GM10248 (cell line): ENCODE measurements at regions of chr19 and their contacts with region 1.

Region 1: DNA sequence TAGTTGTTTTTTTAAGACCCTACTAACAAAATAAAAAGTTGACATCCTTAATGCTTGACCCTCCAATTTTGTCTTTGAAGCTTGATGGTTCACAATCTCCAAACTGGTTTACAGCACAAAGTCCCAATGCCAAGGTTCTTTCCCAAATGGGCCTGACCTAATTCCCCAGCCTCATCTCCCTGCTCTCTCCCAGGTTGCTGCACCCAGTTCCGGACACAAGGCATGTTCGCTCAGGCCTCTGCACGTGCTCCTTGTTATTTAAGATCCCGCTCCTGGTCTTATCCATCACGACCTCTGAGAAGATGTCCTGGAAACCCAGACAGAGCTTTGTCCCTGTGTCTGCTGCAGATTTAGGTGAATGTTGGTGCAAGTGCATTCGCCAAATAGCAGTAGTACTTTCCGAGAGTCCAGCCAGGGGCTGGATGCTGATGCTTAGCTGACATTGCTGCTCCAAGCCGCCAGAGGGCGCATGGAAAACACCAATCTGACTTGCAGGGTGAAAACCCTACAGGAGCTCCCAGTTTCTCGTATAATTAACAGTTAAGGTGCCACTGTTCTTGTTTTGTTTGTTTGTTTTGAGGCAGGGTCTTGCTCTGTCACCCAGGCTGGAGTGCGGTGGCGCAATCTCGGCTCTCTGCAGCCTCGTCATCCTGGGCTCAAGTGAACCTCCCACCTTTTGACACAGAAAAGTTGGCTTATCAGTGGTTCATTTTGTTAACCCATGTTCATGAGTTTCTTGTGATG is 18.5 kb downstream of the LYPD3 start:
- DNase-seq: peak; percentile 81
- CTCF ChIP-seq: peak; percentile 90

Region 2: DNA sequence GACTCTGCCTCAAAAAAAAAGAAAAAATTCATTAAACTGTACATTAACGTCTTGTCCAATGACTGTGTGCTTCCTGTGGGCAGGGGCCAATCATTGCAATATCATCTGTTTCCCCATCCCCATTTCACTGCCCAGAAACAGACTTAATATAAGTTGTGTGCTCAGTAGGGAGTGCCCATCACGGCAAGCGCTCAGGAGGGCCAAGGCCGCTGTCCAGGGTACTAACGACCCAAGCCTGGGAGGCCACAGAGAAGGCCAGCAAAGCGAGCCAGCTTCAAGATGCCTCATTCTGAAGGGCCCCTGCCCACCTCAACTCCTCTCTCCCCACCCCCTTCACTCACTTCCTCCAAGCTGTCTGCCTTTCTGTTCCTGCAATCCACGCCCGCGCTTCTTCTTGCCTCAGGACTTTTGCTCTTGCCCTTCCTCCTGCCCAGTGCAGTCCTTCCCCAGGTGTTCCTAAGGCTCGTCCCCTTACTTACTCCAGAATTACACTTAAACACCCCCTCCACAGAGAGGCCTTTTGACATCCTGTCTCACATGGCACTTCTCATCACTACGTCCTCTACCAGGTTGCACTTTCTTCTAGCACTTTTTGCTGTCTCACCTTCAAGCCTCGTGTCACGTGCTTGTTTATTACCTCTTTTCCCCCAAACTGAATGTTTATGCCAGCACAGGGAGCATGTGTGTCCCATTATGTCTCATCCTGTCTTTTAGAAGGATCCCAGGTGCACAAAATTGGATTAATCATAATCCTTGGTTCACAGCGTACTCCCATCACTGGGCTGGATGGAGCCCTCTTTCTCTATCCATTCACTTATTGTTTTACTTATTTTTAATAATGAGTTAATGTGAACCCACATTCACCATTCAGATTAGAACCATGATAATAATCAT is 1303.3 kb before region 1 on chr19:
- CTCF ChIA-PET with region 1: no interaction called
- POLR2A ChIA-PET with region 1: no interaction called
- DNase-seq: no peak
- CTCF ChIP-seq: no peak

Region 3: DNA sequence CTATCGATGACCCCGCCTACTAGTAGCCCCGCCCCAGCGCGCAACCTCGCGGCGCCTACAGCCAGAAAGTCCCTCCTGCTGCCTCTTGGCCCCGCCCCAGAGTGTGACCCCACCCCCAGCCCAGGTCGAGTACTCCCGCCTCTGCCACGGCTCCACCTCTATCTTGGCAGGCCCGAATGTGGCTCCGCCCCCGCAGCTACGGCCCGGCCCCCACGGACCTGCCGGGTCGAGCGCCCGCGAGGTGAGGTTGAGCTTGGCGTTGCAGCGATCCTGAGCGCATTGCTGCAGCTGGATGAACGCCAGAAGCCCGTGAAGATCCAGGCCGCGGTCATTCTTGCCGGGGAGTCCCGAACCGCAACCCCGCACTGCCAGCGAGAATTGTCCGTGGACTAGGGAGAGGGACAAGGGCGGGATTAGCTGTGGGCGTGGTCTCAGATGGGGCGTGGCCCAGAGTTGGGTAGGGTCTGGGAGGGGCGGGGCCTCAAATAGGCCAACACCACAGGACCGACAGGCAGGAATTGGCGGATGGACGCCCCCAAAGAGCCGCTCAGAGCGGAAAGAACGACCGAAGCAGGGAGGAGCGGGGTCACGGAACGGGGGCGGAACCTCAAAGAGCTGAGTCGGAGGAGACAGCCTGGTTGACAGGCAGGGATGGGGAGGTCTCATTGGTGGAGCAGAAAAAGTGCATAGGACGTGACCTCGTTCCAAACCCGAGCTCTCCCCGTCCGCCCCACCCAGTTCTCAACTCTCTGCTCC is 16.6 kb after region 1 on chr19:
- CTCF ChIA-PET with region 1: interaction called, 88 read pairs
- POLR2A ChIA-PET with region 1: no interaction called
- DNase-seq: peak; percentile 99
- CTCF ChIP-seq: no peak

Region 4: DNA sequence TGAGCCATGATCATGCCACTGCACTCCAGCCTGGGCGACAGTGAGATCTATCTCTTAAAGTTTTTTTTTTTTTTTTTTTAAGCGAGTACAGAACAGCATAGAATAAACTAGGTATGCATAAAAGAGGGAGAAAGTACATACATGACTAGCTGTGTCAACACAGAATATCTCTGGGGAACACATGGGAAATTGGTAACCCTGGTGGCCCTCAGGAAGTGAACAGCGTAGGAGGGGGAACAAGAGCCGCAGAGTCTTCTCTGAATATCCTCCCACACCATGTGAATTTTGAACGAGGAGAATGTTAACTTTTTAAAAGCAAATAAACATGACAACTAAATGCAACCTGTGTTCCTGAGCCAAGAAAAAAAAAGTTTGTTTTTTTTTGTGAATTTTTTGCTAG is 42.4 kb after region 1 on chr19:
- CTCF ChIA-PET with region 1: interaction called, 14 read pairs
- POLR2A ChIA-PET with region 1: no interaction called
- DNase-seq: peak; percentile 68
- CTCF ChIP-seq: no peak

Region 5: GRCh38 chr19:43511324-43511723 is 64.4 kb after region 1 on chr19:
- CTCF ChIA-PET with region 1: interaction called, 340 read pairs
- POLR2A ChIA-PET with region 1: no interaction called
- DNase-seq: no peak
- CTCF ChIP-seq: no peak

Region 6: DNA sequence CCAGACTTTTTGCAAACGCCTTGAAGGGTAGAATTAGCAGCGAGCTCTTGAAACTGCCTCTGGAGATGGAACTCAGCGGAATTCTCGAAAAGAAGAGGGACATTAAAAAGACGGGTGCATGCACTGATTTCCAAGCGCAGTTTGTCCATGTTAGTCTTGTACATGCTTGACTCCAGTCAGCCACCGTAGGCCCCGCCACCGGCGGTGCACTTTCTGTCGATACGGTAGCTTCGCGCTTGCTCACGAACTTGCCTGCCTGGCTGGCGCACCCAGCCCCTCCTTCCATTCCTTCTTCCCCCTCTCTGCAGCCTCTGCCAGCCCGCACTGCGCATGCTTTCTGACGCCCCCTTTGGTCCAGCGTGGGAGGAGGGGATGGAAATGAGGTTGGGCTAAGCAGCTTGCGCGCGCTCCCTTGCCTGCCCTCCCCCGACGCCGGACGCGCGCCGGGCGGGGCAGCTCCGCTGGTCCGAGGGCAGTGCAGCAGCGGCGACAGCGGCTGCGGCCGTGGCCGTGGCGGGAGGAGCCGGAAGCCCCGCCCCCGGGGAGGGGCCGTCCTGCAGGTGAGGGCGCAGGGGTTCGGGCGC is 86.1 kb after region 1 on chr19 and contains the start of gene ZNF575:
- CTCF ChIA-PET with region 1: interaction called, 12 read pairs
- POLR2A ChIA-PET with region 1: no interaction called
- DNase-seq: peak; percentile 92
- CTCF ChIP-seq: no peak

Region 7: GRCh38 chr19:43595999-43596841 is 149.3 kb after region 1 on chr19 and contains the starts of genes IRGQ and ZNF576:
- CTCF ChIA-PET with region 1: interaction called, 29 read pairs
- POLR2A ChIA-PET with region 1: no interaction called
- DNase-seq: peak; percentile 99
- CTCF ChIP-seq: no peak